ENCODE measurements at regions of chr9 and their contacts with region 1.

Region 1: DNA sequence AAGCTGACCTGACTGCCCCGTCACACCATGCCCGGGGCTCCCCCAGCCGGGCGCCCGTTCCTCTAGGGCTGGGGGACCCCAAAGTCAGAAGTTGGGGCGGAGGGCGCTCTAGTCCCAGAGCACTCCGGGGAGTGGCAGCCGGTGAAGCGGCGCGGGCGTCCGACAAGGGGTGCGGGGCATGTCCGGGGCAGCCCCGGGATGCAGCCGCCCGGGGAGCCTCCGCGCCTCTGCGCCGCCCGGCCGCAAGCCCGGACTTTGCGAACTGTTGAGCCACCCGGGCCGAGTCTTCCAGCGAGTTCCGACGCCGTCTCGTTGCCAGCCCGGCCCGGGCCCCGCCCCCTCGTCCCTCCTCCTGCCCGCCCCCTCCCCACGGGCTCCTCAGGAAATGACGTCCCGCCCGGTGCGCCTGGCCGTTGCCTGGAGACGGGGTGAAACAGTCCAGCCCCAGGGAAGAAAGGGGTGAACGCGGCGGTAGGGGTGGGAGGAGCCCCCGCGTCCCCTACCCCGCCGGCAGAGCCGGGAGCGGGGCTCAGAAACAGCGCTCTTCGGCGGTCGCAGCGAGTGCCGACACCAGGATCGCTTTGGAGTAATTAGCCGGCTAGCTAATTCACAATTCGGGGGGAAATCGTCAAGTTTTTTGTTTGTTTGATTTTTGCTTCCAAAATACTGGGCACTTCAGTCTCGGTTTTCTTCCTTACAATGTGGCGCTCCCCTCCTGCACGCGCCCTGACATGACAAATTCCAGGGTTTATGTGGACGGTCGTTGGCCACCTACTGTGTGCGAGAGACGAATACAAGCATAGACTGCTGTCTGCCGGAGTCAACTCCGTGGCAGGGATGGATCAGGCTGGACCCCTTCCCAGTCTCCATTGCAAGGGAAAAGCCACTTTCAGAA is at the start of gene WHRN:
- DNase-seq: peak; percentile 89
- H3K4me3 Mint-ChIP-seq: peak within 1 kb of the TSS; percentile 81
- H3K27ac Mint-ChIP-seq: peak within 1 kb of the TSS; percentile 60
- H3K4me1 Mint-ChIP-seq: no peaks in the 10 kb centered on the region
- H3K27me3 Mint-ChIP-seq: peaks cover 36% of the 10 kb centered on the region
- CTCF ChIP-seq: no peak
- total RNA-seq, gene WHRN: 3.6 and 4.9 TPM in 2 replicates

Region 2: DNA sequence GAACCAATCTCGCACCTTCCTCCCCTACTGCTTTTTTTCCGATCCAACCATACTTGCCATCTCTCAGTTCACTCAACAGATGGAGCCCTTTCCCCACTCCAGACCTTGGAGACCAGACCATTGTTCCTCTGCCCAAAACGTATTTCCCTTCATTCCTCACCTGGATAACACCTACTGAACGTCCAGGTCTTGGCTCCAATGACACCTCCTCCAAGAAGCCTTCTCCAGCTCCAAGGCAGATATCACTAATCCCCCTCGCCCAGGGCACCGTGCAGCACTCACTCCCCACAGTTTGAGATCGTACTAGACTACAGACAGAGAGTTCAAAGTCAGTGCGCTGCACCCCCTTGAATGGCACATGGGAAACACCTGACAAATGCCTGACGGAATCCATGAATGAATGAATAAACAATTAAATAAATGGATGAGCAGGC is 70.5 kb before region 1 on chr9:
- CTCF ChIA-PET with region 1: no interaction called
- intact Hi-C with region 1: loop called (anchors 5 kb)
- DNase-seq: peak; percentile 34
- H3K4me3 Mint-ChIP-seq: no peak overlapping the region
- H3K27ac Mint-ChIP-seq: no peak overlapping the region
- H3K4me1 Mint-ChIP-seq: no peaks in the 10 kb centered on the region
- H3K27me3 Mint-ChIP-seq: peaks cover 22% of the 10 kb centered on the region
- CTCF ChIP-seq: peak; percentile 33

Measured in Calu3 (cell line).